ENCODE measurements at regions of chr18 and their contacts with region 1.

Region 1: GRCh38 chr18:45967007-45967706 is at the start of gene EPG5:
- DNase-seq: peak; percentile 95
- ATAC-seq: peak; percentile 98
- H3K4me3 ChIP-seq: peak within 1 kb of the TSS; percentile 89
- H3K27ac ChIP-seq: peak within 1 kb of the TSS; percentile 67
- H3K4me1 ChIP-seq: peaks cover 7% of the 10 kb centered on the region
- H3K27me3 ChIP-seq: no peaks in the 10 kb centered on the region
- CTCF ChIP-seq: no peak
- POLR2A ChIP-seq: peak; percentile 74; the same call in 1 of the 2 replicates
- RAD21 ChIP-seq: no peak
- total RNA-seq, gene EPG5: 104 and 114 TPM in 2 replicates

Region 2: DNA sequence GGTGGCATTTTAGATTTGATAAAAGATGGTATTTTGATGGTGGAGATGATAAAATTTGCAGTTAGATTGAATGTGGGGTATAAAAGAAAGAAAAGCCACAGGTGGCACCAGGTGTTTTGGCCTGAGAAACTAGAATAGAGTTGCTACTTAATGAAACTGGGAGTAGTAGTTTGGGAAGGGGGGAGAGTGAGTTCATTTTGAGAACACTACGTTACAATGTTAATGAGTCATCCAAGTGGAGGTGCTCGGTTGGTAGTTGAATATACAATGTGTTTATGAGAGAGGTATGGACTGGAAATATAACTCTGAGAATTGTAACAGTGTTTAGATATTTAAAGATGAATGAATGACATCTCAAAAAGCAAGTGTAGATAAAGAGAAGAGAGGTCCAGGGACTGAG is 26.4 kb before region 1 on chr18:
- CTCF ChIA-PET with region 1: interaction called, 3 read pairs
- POLR2A ChIA-PET with region 1: interaction called, 4 read pairs
- dilution Hi-C with region 1: no loop called
- in situ Hi-C with region 1: no loop called
- intact Hi-C with region 1: loop called (anchors 2 kb)
- DNase-seq: peak; percentile 44
- ATAC-seq: peak; percentile 40
- H3K4me3 ChIP-seq: no peak overlapping the region
- H3K27ac ChIP-seq: peak overlapping the region; percentile 96
- H3K4me1 ChIP-seq: peaks cover 14% of the 10 kb centered on the region
- H3K27me3 ChIP-seq: no peaks in the 10 kb centered on the region
- CTCF ChIP-seq: no peak
- POLR2A ChIP-seq: no peak
- RAD21 ChIP-seq: no peak

Region 3: DNA sequence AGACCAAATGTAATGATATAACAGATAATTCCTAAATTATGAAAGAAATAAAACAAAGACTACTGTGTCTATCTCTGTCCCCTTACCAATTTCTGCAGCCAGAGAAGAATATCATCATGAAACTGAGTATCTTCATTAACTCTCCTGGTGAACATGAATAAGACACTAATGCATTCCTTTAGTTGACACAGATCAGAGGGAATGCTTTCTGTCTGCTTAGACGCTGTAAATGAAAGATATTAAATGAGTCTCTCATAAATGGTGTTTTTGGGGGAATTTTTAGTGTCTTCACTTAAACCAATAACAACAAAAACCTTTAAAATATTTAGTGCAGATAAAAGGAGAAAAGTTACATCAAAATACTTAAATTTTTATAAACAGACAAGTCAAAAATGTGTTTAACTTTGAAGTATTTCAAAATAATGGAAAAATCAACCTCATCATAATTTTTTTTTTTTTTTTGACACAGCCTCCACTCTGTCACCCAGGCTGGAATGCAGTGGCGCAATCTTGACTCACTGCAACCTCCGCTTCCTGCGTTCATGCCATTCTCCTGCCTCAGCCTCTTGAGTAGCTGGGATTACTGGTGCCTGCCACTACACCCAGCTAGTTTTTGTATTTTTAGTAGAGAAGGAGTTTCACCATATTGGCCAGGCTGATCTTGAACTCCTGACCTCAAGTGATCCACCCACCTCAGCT is 16.0 kb before region 1 on chr18:
- CTCF ChIA-PET with region 1: no interaction called
- POLR2A ChIA-PET with region 1: interaction called, 4 read pairs
- dilution Hi-C with region 1: no loop called
- in situ Hi-C with region 1: no loop called
- intact Hi-C with region 1: loop called (anchors 1 kb)
- DNase-seq: peak; percentile 90
- ATAC-seq: peak; percentile 76
- H3K4me3 ChIP-seq: no peak overlapping the region
- H3K27ac ChIP-seq: peak overlapping the region; percentile 84; the same call in 1 of the 2 replicates
- H3K4me1 ChIP-seq: peaks cover 20% of the 10 kb centered on the region
- H3K27me3 ChIP-seq: no peaks in the 10 kb centered on the region
- CTCF ChIP-seq: no peak
- POLR2A ChIP-seq: no peak
- RAD21 ChIP-seq: no peak